ENCODE measurements at regions of chr5 and their contacts with region 1.

Region 1: GRCh38 chr5:141681695-141682641 is at the start of gene ARAP3:
- DNase-seq: peak; percentile 62
- ATAC-seq: peak; percentile 88
- H3K4me3 Mint-ChIP-seq: peak within 1 kb of the TSS; percentile 75
- H3K27ac Mint-ChIP-seq: peak within 1 kb of the TSS; percentile 73
- H3K4me1 Mint-ChIP-seq: peaks cover 30% of the 10 kb centered on the region
- H3K27me3 Mint-ChIP-seq: no peaks in the 10 kb centered on the region
- total RNA-seq, gene ARAP3: 9.9 to 11.0 TPM

Region 2: GRCh38 chr5:141628175-141628788 is 53.7 kb before region 1 on chr5:
- CTCF ChIA-PET with region 1: no interaction called
- DNase-seq: no peak
- ATAC-seq: no peak
- H3K4me3 Mint-ChIP-seq: no peak overlapping the region
- H3K27ac Mint-ChIP-seq: no peak overlapping the region
- H3K4me1 Mint-ChIP-seq: peaks cover 18% of the 10 kb centered on the region
- H3K27me3 Mint-ChIP-seq: no peaks in the 10 kb centered on the region

Region 3: GRCh38 chr5:141664732-141665461 is 17.1 kb before region 1 on chr5:
- CTCF ChIA-PET with region 1: interaction called, 19 read pairs
- DNase-seq: peak; percentile 81
- ATAC-seq: peak; percentile 93
- H3K4me3 Mint-ChIP-seq: no peak overlapping the region
- H3K27ac Mint-ChIP-seq: no peak overlapping the region
- H3K4me1 Mint-ChIP-seq: peaks cover 2% of the 10 kb centered on the region
- H3K27me3 Mint-ChIP-seq: no peaks in the 10 kb centered on the region

Region 4: GRCh38 chr5:141709699-141710267 is 27.8 kb after region 1 on chr5:
- CTCF ChIA-PET with region 1: no interaction called
- DNase-seq: no peak
- ATAC-seq: no peak
- H3K4me3 Mint-ChIP-seq: no peak overlapping the region
- H3K27ac Mint-ChIP-seq: no peak overlapping the region
- H3K4me1 Mint-ChIP-seq: peaks cover 5% of the 10 kb centered on the region
- H3K27me3 Mint-ChIP-seq: peaks cover 9% of the 10 kb centered on the region

Region 5: DNA sequence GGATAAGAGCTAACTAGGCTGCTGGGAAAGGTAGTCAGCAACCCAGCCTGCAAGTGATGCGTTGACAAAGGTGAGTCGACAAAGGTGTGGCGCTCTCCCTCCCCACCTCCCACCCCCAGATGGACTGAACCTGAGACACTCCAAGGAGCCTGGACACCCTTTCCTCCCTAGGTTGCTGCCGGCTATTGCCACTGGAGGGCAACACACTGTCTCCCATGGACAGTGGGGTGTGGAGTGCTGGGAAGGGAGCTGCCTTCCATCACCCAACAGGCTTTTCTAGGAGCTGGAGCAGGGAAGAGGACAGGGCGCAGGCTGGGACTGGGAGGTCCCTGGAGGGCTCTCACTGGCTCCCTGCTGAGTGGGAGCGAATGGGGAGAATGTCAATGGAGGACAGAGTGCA is 75.4 kb after region 1 on chr5:
- CTCF ChIA-PET with region 1: no interaction called
- DNase-seq: no peak
- ATAC-seq: no peak
- H3K4me3 Mint-ChIP-seq: no peak overlapping the region
- H3K27ac Mint-ChIP-seq: no peak overlapping the region
- H3K4me1 Mint-ChIP-seq: no peaks in the 10 kb centered on the region
- H3K27me3 Mint-ChIP-seq: peaks cover 64% of the 10 kb centered on the region